ENCODE measurements at regions of chr9 and their contacts with region 1.

Region 1: GRCh38 chr9:109244157-109245132 is 76.4 kb downstream of the EPB41L4B start:
- DNase-seq: peak; percentile 79
- H3K4me3 ChIP-seq: no peak overlapping the region
- H3K27ac ChIP-seq: no peak overlapping the region
- H3K4me1 ChIP-seq: peaks cover 0 to 5% (median 0%) of the 10 kb centered on the region in 4 donors
- H3K27me3 ChIP-seq: no peaks in the 10 kb centered on the region
- CTCF ChIP-seq: peak; percentile 42 to 88 (median 79)
- EP300 ChIP-seq: no peak
- POLR2A ChIP-seq: no peak

Region 2: GRCh38 chr9:109469646-109470358 is 225.4 kb after region 1 on chr9:
- intact Hi-C with region 1: loop called (anchors 1 kb)
- DNase-seq: peak; percentile 81
- H3K4me3 ChIP-seq: no peak overlapping the region
- H3K27ac ChIP-seq: no peak overlapping the region
- H3K4me1 ChIP-seq: no peaks in the 10 kb centered on the region
- H3K27me3 ChIP-seq: no peaks in the 10 kb centered on the region
- CTCF ChIP-seq: peak; percentile 54 to 83 (median 76)
- EP300 ChIP-seq: no peak
- POLR2A ChIP-seq: no peak

Region 3: GRCh38 chr9:109520478-109521132 is 276.2 kb after region 1 on chr9:
- intact Hi-C with region 1: loop called (anchors 5 kb)
- DNase-seq: no peak
- H3K4me3 ChIP-seq: no peak overlapping the region
- H3K27ac ChIP-seq: no peak overlapping the region
- H3K4me1 ChIP-seq: no peaks in the 10 kb centered on the region
- H3K27me3 ChIP-seq: no peaks in the 10 kb centered on the region
- CTCF ChIP-seq: peak; percentile 28 to 76 (median 55)
- EP300 ChIP-seq: no peak
- POLR2A ChIP-seq: no peak

Measured in sigmoid colon (tissue), 7 donors.